ENCODE measurements at regions of chr22 and their contacts with region 1.

Region 1: GRCh38 chr22:21947040-21948014 is 5.3 kb downstream of the PPM1F start:
- DNase-seq: peak; percentile 65
- ATAC-seq: peak; percentile 69
- H3K4me3 Mint-ChIP-seq: no peak overlapping the region
- H3K27ac Mint-ChIP-seq: peak overlapping the region; percentile 61
- H3K4me1 Mint-ChIP-seq: peaks cover 24% of the 10 kb centered on the region
- H3K27me3 Mint-ChIP-seq: peaks cover 14% of the 10 kb centered on the region
- CTCF ChIP-seq: no peak

Region 2: DNA sequence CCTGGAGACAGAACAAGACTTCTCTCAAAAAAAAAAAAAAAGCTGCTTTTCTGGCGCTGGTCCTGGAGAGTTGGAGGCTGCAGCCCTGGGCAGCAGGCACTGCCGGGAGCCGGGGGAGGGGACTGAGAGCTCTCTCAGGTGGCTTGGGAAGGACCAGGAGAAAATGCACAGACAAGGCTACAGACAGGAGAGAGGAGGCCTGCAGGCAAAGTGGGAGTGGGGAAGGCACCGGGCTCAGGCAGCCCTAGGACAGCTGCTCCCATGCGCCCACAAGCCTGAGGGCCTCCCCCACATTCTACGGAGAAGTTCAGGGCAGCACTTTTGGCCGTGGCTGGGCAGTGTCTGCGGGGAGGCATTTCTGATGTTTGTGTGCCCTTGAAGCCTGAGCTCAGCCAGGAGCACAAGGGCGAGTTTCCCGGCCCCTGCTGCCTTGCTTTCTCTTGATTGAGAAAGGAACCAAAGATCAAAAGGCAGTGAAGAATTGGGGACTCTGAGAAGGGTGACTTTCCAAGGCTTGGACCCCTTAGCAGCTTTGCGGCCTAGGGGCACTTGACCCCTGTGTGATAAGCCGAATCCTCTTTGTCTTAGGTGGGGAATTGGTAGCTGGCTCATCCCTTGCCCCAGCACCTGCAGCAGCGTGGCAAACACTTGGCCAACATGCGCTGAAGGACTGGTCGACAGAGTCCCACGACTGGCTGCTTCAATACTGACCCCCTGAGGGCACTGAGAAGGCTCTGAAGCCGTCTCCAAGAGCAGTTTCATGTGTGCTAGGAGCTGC is 30.0 kb before region 1 on chr22:
- CTCF ChIA-PET with region 1: interaction called, 16 read pairs
- POLR2A ChIA-PET with region 1: no interaction called
- DNase-seq: peak; percentile 41
- ATAC-seq: peak; percentile 32
- H3K4me3 Mint-ChIP-seq: no peak overlapping the region
- H3K27ac Mint-ChIP-seq: peak overlapping the region; percentile 86; the same call in 1 of the 2 replicates
- H3K4me1 Mint-ChIP-seq: peaks cover 45% of the 10 kb centered on the region
- H3K27me3 Mint-ChIP-seq: no peaks in the 10 kb centered on the region
- CTCF ChIP-seq: no peak

Measured in WTC11 (cell line).